ENCODE measurements at regions of chr20 and their contacts with region 1.

Region 1: DNA sequence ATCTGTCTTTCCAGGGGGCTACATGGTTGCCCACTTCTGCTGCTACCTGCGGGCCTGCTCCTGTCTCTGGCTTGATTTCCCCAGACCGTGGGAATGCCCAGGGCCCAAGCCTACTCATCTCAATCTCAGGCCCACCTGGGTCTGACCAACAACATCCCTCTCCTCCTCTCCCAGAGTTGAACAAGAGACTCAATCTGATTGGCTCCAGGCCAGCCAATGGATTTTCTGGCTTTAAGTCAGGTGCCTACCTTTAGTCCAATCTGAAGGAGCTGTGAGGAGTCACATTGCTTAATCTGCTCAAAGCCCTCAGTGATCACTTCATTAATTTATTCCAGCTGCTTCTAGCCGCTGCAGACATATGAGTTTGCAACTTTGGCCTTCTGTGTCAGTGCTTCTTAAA is 162.4 kb upstream of the KCNG1 start:
- DNase-seq: no peak
- H3K4me3 ChIP-seq: no peak overlapping the region
- H3K27ac ChIP-seq: no peak overlapping the region
- H3K4me1 ChIP-seq: no peaks in the 10 kb centered on the region
- H3K27me3 ChIP-seq: peaks cover 1% of the 10 kb centered on the region
- CTCF ChIP-seq: no peak

Region 2: DNA sequence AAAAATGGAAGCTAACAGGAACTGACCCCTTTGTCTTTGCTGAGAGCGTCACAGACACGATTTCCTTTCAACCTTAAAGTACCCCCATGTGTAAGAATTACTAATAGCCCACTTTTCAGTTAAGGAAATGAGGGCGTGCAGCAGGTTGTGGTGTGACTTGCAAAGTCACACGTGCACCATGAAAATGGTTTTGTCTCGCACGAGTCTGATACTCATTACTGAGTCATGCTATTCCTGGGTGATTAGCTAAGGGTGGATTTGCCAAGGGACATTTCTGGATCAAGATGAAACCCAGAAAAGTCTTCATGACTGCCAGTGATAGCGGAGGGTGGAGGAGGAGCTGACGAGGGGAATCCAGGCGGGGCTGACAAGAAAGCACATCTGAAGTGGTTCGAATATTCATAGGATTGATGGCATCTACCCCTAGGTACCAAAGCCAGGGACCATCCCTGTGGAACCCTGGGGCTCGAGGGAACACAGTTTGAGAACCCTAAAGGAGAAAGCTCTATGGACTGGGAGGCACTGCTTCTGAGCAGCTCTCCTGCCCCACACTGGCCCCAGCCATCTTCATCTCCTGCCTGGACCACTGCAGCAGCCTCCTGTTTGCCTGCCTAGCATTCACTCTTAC is 369.4 kb after region 1 on chr20:
- CTCF ChIA-PET with region 1: no interaction called
- dilution Hi-C with region 1: no loop called
- in situ Hi-C with region 1: no loop called
- intact Hi-C with region 1: loop called (anchors 5 kb)
- DNase-seq: peak; percentile 41
- H3K4me3 ChIP-seq: no peak overlapping the region
- H3K27ac ChIP-seq: no peak overlapping the region
- H3K4me1 ChIP-seq: no peaks in the 10 kb centered on the region
- H3K27me3 ChIP-seq: no peaks in the 10 kb centered on the region
- CTCF ChIP-seq: no peak